ENCODE measurements at regions of chr3 and their contacts with region 1.

Region 1: GRCh38 chr3:155805802-155806618 is at the start of gene C3orf33:
- DNase-seq: no peak
- H3K4me3 ChIP-seq: peak within 1 kb of the TSS; percentile 79
- CTCF ChIP-seq: peak; percentile 91

Region 2: GRCh38 chr3:155495387-155495786 is 310.6 kb before region 1 on chr3:
- CTCF ChIA-PET with region 1: no interaction called
- POLR2A ChIA-PET with region 1: no interaction called
- DNase-seq: no peak
- H3K4me3 ChIP-seq: no peak overlapping the region
- CTCF ChIP-seq: no peak

Region 3: GRCh38 chr3:155701882-155702465 is 104.0 kb before region 1 on chr3:
- CTCF ChIA-PET with region 1: no interaction called
- POLR2A ChIA-PET with region 1: no interaction called
- DNase-seq: peak; percentile 3
- H3K4me3 ChIP-seq: no peak overlapping the region
- CTCF ChIP-seq: peak; percentile 25

Region 4: GRCh38 chr3:155772801-155773200 is 33.2 kb before region 1 on chr3:
- CTCF ChIA-PET with region 1: interaction called, 28 read pairs
- POLR2A ChIA-PET with region 1: no interaction called
- DNase-seq: no peak
- H3K4me3 ChIP-seq: no peak overlapping the region
- CTCF ChIP-seq: no peak

Region 5: DNA sequence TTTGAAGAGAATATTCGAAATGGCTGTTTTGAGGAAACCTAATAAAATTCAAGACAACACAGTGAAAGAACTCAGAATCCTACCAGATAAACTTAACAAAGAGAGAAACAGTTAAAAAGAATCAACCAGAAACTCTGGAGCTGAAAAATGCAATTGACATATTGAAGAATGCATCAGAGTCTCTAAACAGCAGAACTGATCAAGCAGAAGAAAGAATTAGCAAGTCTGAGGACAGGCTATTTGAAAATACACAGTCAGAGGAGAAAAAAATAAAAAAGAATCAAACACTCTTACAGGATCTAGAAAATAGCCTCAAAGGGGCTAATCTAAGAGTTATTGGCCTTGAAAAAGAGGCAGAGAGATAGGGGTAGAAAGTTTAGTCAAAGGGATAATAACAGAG is 13.5 kb before region 1 on chr3:
- CTCF ChIA-PET with region 1: interaction called, 39 read pairs
- POLR2A ChIA-PET with region 1: no interaction called
- DNase-seq: no peak
- H3K4me3 ChIP-seq: no peak overlapping the region
- CTCF ChIP-seq: no peak

Region 6: DNA sequence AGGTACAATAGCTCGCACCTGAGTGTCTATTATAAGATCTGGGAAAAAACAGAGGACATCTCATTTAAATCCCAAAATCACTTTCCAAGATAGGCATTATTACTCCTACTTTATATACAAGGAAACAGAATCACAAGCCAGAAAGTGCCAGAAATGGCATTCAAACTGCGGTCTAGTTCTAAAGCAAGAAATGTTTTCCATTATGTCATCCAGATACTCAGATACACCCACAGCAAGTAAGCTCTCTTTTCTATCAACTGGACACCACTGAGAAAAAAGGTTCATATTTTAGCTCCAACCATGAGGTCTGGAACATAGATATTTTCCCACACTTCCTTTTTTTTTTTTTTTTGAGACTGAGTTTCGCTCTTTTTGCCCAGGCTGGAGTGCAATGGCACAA is 40.1 kb after region 1 on chr3:
- CTCF ChIA-PET with region 1: interaction called, 12 read pairs
- POLR2A ChIA-PET with region 1: no interaction called
- DNase-seq: no peak
- H3K4me3 ChIP-seq: no peak overlapping the region
- CTCF ChIP-seq: no peak

Region 7: DNA sequence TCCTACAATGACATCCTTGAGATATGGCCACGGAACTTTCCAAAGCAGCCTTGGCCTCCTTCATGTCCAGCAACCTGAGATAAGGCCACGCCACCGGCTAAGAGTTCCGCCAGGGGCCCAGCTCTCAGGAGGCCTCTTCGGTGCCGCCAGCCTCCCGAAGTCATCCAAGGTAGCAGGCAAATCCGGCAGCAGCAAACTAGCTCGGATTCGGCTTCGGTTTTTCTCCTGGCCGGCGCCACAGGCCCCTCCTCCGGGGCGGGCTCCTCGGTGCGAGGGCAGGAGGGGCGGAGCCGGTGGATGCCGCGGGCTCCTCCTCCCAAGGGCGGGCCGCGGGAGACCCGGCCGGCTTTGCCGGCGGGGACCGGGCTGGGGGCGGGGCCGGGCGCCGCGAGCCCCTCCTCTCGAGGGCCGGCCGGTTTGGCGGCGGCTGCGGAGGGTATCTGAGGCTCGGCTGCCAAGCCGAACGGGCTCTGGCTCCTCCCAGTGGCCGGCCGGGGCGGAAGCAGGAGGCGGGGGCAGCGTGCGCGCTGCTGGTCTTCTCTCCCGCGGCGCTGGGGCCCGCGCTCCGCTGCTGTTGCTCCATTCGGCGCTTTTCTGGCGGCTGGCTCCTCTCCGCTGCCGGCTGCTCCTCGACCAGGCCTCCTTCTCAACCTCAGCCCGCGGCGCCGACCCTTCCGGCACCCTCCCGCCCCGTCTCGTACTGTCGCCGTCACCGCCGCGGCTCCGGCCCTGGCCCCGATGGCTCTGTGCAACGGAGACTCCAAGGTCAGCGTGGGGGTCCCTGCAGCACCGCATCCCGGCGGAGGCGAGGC is 64.3 kb after region 1 on chr3 and contains the start of gene GMPS:
- CTCF ChIA-PET with region 1: interaction called, 12 read pairs
- POLR2A ChIA-PET with region 1: no interaction called
- DNase-seq: peak; percentile 24
- H3K4me3 ChIP-seq: peak within 1 kb of the TSS; percentile 66
- CTCF ChIP-seq: peak; percentile 66